ENCODE measurements at regions of chr17 and their contacts with region 1.

Region 1: DNA sequence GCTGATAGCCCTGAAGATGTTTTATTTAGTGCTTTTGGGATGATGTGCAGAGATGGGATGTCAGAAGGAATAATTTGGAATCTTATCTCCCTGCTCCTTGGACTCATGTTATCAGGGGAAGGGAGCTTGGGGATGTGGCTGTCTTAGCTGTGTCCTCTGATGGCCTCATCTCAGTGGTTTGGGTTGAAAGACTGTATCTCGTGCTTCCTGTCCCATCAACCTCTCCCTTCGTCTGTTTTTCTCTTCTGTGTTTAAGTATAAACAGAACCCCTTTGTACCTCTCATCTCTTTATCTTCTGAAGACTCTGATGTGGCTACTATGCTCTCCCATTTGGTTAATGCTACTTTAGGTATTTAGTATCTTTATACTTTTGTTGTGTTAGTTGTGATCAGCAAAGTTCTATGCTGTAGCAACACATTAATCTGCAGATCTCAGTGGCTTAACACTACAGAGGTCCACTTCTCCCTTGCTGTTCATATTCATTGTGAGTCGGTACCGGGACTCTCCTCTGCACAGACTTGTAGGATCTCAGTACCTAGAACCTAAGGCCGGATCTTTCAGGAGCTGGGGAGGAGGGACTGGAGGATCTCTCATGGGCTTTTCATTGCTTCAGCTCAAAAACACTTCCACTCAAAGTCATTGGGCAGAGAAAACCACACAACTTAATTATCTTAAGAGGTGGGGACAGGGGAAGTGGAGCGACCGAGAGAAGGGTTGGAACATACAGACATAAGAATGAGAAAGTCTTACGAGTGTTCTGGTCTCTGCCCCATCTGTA is 28.8 kb downstream of the PRKCA start:
- DNase-seq: peak; percentile 47 to 71 (median 69)
- H3K4me3 ChIP-seq: peak overlapping the region in 1 of 2 donors; percentile 17
- H3K4me3 Mint-ChIP-seq: peak overlapping the region; percentile 79 to 92 (median 84)
- H3K27ac ChIP-seq: peak overlapping the region; percentile 51
- H3K27ac Mint-ChIP-seq: peak overlapping the region; percentile 86 to 97 (median 93)
- H3K4me1 ChIP-seq: peaks cover 92% of the 10 kb centered on the region
- H3K4me1 Mint-ChIP-seq: peaks cover 57 to 91% (median 70%) of the 10 kb centered on the region in 4 donors
- H3K27me3 ChIP-seq: no peaks in the 10 kb centered on the region
- H3K27me3 Mint-ChIP-seq: no peaks in the 10 kb centered on the region

Region 2: GRCh38 chr17:66255112-66255511 is 76.1 kb before region 1 on chr17:
- CTCF ChIA-PET with region 1: no interaction called
- POLR2A ChIA-PET with region 1: no interaction called
- intact Hi-C with region 1: no loop called
- DNase-seq: peak; percentile 64 to 74 (median 70)
- H3K4me3 ChIP-seq: no peak overlapping the region
- H3K4me3 Mint-ChIP-seq: peak overlapping the region; percentile 25 to 81 (median 66)
- H3K27ac ChIP-seq: peak overlapping the region; percentile 10
- H3K27ac Mint-ChIP-seq: peak overlapping the region; percentile 19 to 95 (median 81)
- H3K4me1 ChIP-seq: peaks cover 26% of the 10 kb centered on the region
- H3K4me1 Mint-ChIP-seq: peaks cover 16 to 25% (median 20%) of the 10 kb centered on the region in 4 donors
- H3K27me3 ChIP-seq: no peaks in the 10 kb centered on the region
- H3K27me3 Mint-ChIP-seq: no peaks in the 10 kb centered on the region

Region 3: DNA sequence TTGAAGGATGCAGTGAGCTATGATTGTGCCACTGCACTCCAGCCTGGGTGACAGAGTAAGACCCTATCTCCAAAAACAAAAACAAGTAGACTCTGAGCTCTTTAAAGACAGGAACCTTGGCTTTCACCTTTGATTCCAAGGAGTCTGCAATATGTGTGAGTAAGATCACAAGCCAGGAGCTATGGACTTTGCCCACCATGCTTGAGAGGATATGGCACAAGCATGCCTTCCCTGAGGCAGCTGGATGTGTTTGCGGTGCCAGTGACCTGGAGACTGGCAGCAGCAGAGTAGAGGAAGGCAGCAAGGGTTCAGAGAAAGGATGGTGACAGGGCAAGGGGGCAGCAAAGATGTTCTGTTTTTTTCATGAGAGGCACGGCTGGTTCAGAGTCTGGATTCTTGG is 43.3 kb before region 1 on chr17:
- CTCF ChIA-PET with region 1: no interaction called
- POLR2A ChIA-PET with region 1: interaction called, 11 read pairs
- intact Hi-C with region 1: no loop called
- DNase-seq: no peak
- H3K4me3 ChIP-seq: no peak overlapping the region
- H3K4me3 Mint-ChIP-seq: peak overlapping the region in 3 of 8 donors; percentile 17 to 30 (median 22)
- H3K27ac ChIP-seq: no peak overlapping the region
- H3K27ac Mint-ChIP-seq: peak overlapping the region in 5 of 7 donors; percentile 23 to 88 (median 41)
- H3K4me1 ChIP-seq: peaks cover 27% of the 10 kb centered on the region
- H3K4me1 Mint-ChIP-seq: peaks cover 26 to 53% (median 39%) of the 10 kb centered on the region in 4 donors
- H3K27me3 ChIP-seq: no peaks in the 10 kb centered on the region
- H3K27me3 Mint-ChIP-seq: no peaks in the 10 kb centered on the region

Region 4: DNA sequence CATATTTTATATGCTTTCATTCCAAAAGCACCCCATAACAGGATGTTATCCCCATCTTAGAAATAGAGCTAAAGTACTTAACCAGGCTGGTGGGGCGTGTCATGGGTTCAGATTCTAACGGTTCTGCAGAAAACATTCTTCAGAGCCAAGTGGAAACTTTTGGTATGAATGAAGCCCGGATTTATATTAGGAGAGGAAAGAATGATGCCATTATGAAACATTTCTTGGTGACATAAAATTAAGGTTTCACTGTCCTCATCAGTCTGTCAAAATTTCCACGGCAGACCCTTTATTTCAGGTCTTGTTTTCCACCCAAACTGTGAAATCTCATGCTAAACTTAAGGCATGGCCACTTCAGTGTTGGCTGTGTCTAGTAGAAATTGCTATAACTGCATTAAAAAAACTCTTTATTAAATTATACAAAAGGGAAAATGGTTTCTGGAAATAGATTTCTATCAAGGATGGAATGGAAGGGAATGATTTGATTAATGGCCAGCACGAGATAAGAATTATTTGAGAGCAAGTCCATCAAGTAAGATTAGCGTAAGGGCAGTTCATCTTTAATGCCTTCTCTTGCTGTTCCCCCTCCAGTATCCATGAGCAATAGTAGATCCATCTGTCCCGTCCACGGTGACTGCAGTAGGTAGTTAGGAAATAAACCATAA is 17.1 kb before region 1 on chr17:
- CTCF ChIA-PET with region 1: interaction called, 5 read pairs
- POLR2A ChIA-PET with region 1: interaction called, 14 read pairs
- intact Hi-C with region 1: no loop called
- DNase-seq: no peak
- H3K4me3 ChIP-seq: no peak overlapping the region
- H3K4me3 Mint-ChIP-seq: peak overlapping the region in 4 of 8 donors; percentile 7 to 49 (median 42)
- H3K27ac ChIP-seq: no peak overlapping the region
- H3K27ac Mint-ChIP-seq: peak overlapping the region in 3 of 7 donors; percentile 11 to 44 (median 13)
- H3K4me1 ChIP-seq: peaks cover 57% of the 10 kb centered on the region
- H3K4me1 Mint-ChIP-seq: peaks cover 62 to 85% (median 73%) of the 10 kb centered on the region in 4 donors
- H3K27me3 ChIP-seq: no peaks in the 10 kb centered on the region
- H3K27me3 Mint-ChIP-seq: no peaks in the 10 kb centered on the region

Region 5: DNA sequence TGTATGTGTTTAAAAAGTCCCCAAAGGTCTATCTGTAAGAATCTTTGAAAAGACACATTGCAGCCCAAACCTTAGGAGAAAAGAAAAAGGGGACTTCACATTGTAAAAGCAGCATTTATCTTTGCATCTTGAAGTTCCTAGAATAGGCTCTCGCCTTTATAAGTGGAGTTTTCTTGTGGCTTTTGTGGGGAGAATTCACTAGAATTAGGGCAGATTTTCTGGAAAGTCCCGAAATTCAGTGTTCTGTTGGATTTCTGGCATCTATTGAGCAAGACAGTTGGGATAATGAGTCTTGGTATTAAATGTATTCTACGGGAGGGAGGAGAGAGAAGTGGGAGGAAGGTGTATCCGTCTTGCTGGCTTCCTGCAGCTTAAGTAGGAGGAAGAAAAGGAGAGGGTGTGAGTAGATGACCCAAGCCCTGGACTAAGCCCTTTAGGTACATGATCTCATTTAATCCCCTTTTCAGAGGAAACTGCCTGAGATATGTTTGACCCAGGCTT is 33.8 kb after region 1 on chr17:
- CTCF ChIA-PET with region 1: interaction called, 4 read pairs
- POLR2A ChIA-PET with region 1: interaction called, 4 read pairs
- intact Hi-C with region 1: loop called (anchors 5 kb)
- DNase-seq: no peak
- H3K4me3 ChIP-seq: no peak overlapping the region
- H3K4me3 Mint-ChIP-seq: peak overlapping the region in 7 of 8 donors; percentile 9 to 77 (median 59)
- H3K27ac ChIP-seq: no peak overlapping the region
- H3K27ac Mint-ChIP-seq: peak overlapping the region in 4 of 7 donors; percentile 47 to 70 (median 62)
- H3K4me1 ChIP-seq: peaks cover 50% of the 10 kb centered on the region
- H3K4me1 Mint-ChIP-seq: peaks cover 56 to 90% (median 71%) of the 10 kb centered on the region in 4 donors
- H3K27me3 ChIP-seq: no peaks in the 10 kb centered on the region
- H3K27me3 Mint-ChIP-seq: no peaks in the 10 kb centered on the region

Region 6: GRCh38 chr17:66397486-66397885 is 66.3 kb after region 1 on chr17:
- CTCF ChIA-PET with region 1: no interaction called
- POLR2A ChIA-PET with region 1: interaction called, 15 read pairs
- intact Hi-C with region 1: loop called (anchors 2 kb)
- DNase-seq: no peak
- H3K4me3 ChIP-seq: no peak overlapping the region
- H3K4me3 Mint-ChIP-seq: peak overlapping the region in 4 of 8 donors; percentile 13 to 89 (median 70)
- H3K27ac ChIP-seq: no peak overlapping the region
- H3K27ac Mint-ChIP-seq: peak overlapping the region; percentile 49 to 90 (median 79)
- H3K4me1 ChIP-seq: peaks cover 65% of the 10 kb centered on the region
- H3K4me1 Mint-ChIP-seq: peaks cover 42 to 77% (median 61%) of the 10 kb centered on the region in 4 donors
- H3K27me3 ChIP-seq: no peaks in the 10 kb centered on the region
- H3K27me3 Mint-ChIP-seq: no peaks in the 10 kb centered on the region

Region 7: GRCh38 chr17:66555605-66556004 is 224.4 kb after region 1 on chr17:
- CTCF ChIA-PET with region 1: no interaction called
- POLR2A ChIA-PET with region 1: no interaction called
- intact Hi-C with region 1: no loop called
- DNase-seq: no peak
- H3K4me3 ChIP-seq: no peak overlapping the region
- H3K4me3 Mint-ChIP-seq: no peak overlapping the region
- H3K27ac ChIP-seq: no peak overlapping the region
- H3K27ac Mint-ChIP-seq: peak overlapping the region in 1 of 7 donors; percentile 50
- H3K4me1 ChIP-seq: no peaks in the 10 kb centered on the region
- H3K4me1 Mint-ChIP-seq: peaks cover 15 to 30% (median 22%) of the 10 kb centered on the region in 4 donors
- H3K27me3 ChIP-seq: no peaks in the 10 kb centered on the region
- H3K27me3 Mint-ChIP-seq: no peaks in the 10 kb centered on the region

Measured in CD4-positive, alpha-beta memory T cell (primary cell).